SK-N-SH (cell line): ENCODE measurements at regions of chr1 and their contacts with region 1.

Region 1: GRCh38 chr1:18913065-18913835 is 10.9 kb upstream of the ALDH4A1 start:
- DNase-seq: peak; percentile 95
- H3K4me3 ChIP-seq: no peak overlapping the region; a peak in 1 of 4 replicates
- H3K27ac ChIP-seq: no peak overlapping the region
- H3K4me1 ChIP-seq: no peaks in the 10 kb centered on the region; a peak in 1 of 4 replicates
- H3K27me3 ChIP-seq: no peaks in the 10 kb centered on the region
- CTCF ChIP-seq: peak; percentile 98
- EP300 ChIP-seq: no peak
- RAD21 ChIP-seq: peak; percentile 88

Region 2: DNA sequence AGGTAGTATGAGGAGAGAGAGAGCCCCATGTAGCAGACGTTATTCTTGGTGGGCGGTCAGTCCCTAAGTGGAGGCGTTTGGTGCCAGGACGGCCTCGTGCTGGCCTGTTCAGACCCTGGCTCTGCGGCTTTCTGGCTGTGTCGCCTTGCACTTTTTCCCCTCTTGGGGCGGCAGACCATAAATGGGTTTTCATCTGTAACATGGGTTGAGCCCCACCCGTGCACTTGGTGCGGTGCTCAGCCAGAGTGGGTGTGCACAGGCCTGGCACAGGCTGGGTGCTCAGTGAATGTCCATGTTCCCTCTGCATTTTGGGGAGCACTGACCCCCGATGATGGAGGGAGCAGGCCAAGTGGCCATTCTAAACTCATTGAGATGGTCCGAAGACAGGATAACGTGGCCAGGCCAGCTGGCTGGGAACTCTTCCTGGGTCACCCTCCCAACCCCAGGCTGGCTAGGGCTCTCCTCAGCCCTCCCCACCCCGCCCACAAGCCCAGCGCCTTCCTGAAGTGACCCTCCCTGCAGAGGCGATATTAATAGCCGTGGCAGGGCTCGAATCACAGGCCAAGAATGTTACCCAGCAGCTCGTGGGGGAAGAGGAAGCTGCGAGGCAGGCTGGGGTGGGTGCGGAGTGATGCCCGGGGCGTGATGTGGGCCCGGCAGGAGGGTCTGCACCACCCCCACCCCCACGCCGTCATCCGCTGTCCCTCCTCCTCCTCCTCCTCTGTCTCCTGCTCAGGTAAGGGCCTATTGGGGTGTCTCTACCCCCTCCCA is 1295.3 kb before region 1 on chr1:
- CTCF ChIA-PET with region 1: no interaction called
- POLR2A ChIA-PET with region 1: no interaction called
- DNase-seq: no peak
- H3K4me3 ChIP-seq: no peak overlapping the region
- H3K27ac ChIP-seq: no peak overlapping the region
- H3K4me1 ChIP-seq: peaks cover 0 to 14% of the 10 kb centered on the region in 2 experiments; a peak in 1 of 4 replicates
- H3K27me3 ChIP-seq: no peaks in the 10 kb centered on the region
- CTCF ChIP-seq: no peak
- EP300 ChIP-seq: no peak
- RAD21 ChIP-seq: no peak

Region 3: GRCh38 chr1:18883636-18884418 is 29.4 kb before region 1 on chr1:
- CTCF ChIA-PET with region 1: interaction called, 134 read pairs
- POLR2A ChIA-PET with region 1: no interaction called
- DNase-seq: peak; percentile 86
- H3K4me3 ChIP-seq: no peak overlapping the region; a peak in 1 of 4 replicates
- H3K27ac ChIP-seq: no peak overlapping the region
- H3K4me1 ChIP-seq: peaks cover 4 to 8% of the 10 kb centered on the region in 2 experiments; a peak in 2 of 4 replicates
- H3K27me3 ChIP-seq: no peaks in the 10 kb centered on the region
- CTCF ChIP-seq: peak; percentile 84
- EP300 ChIP-seq: no peak
- RAD21 ChIP-seq: peak; percentile 82

Region 4: GRCh38 chr1:18926315-18927081 is 13.2 kb after region 1 on chr1:
- CTCF ChIA-PET with region 1: interaction called, 98 read pairs
- POLR2A ChIA-PET with region 1: no interaction called
- DNase-seq: no peak
- H3K4me3 ChIP-seq: 0 out of 4 replicates have a peak overlapping the region, but pooled peaks of 1 of the 2 experiments have one; percentile 22
- H3K27ac ChIP-seq: peak overlapping the region in 1 of 2 experiments; percentile 94; a peak in 2 of 4 replicates
- H3K4me1 ChIP-seq: peaks cover 46 to 50% of the 10 kb centered on the region in 2 experiments; a peak in 3 of 4 replicates
- H3K27me3 ChIP-seq: no peaks in the 10 kb centered on the region
- CTCF ChIP-seq: no peak
- EP300 ChIP-seq: peak in 1 of 2 experiments; percentile 75; a peak in 1 of 4 replicates
- RAD21 ChIP-seq: no peak

Region 5: DNA sequence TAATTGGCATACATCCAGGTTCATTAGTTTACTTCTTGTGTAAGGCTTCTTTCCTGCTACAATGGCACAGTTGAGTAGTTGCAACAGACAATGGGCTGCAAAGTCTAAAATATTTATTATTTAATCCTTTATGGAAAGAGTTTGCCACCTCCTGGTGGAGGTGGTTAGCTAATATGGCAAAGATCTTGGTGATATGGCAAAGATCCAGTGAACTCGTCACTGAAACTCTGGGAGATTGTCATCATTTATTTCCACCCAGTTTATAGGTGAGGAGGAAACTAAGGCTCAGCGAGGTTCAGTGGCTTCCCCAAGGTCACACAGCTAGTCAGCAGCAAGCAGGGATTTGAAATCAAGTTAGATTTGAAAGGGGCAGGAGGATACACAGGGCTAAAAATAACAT is 59.3 kb after region 1 on chr1:
- CTCF ChIA-PET with region 1: interaction called, 20 read pairs
- POLR2A ChIA-PET with region 1: no interaction called
- DNase-seq: no peak
- H3K4me3 ChIP-seq: no peak overlapping the region
- H3K27ac ChIP-seq: no peak overlapping the region
- H3K4me1 ChIP-seq: no peaks in the 10 kb centered on the region
- H3K27me3 ChIP-seq: no peaks in the 10 kb centered on the region
- CTCF ChIP-seq: peak; percentile 48
- EP300 ChIP-seq: no peak
- RAD21 ChIP-seq: no peak

Region 6: DNA sequence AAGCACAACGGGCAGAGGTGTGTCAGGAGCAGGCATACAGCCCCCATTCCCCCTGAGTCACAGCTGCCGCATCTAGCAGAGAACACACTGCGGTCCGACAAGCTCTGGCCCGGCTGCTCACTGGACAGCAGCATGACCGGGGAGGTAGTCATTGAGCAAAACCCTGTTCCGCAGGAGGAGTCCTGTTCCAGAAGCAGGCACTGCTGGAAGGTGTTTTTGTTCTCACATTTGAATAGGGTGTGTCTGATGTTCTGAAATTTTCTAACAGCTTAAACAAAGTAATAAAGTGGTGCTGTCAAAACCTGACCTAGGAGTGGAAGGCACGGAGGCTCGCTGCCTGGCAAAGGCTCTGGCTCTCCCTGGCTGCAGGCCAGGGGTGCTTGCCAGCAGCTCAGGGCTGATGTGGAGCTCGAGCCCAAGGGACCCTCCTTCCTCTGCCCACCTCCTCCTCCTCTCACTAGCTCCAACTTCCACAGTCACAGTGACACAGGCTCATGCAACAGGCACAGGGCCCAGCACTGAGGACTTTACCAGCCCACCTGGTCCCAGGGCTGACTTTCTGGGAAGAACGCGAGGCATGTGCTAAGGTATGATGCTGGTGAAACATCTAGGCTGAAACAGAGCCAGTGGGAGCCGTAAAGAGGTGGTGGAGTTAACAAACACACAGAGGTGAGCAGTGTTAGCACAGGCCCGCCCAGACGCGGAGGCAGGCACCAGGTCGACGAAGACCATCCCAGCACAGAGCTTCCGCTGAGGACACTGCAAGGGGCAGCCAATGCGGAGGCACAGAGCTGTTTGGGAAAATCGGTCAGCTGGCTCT is 161.9 kb after region 1 on chr1:
- CTCF ChIA-PET with region 1: interaction called, 44 read pairs
- POLR2A ChIA-PET with region 1: no interaction called
- DNase-seq: no peak
- H3K4me3 ChIP-seq: no peak overlapping the region
- H3K27ac ChIP-seq: no peak overlapping the region; a peak in 1 of 4 replicates
- H3K4me1 ChIP-seq: peaks cover 0 to 5% of the 10 kb centered on the region in 2 experiments; a peak in 1 of 4 replicates
- H3K27me3 ChIP-seq: no peaks in the 10 kb centered on the region
- CTCF ChIP-seq: no peak
- EP300 ChIP-seq: no peak
- RAD21 ChIP-seq: no peak

Region 7: GRCh38 chr1:19113697-19114092 is 200.4 kb after region 1 on chr1:
- CTCF ChIA-PET with region 1: interaction called, 49 read pairs
- POLR2A ChIA-PET with region 1: no interaction called
- DNase-seq: peak; percentile 48
- H3K4me3 ChIP-seq: no peak overlapping the region
- H3K27ac ChIP-seq: no peak overlapping the region
- H3K4me1 ChIP-seq: no peaks in the 10 kb centered on the region
- H3K27me3 ChIP-seq: no peaks in the 10 kb centered on the region
- CTCF ChIP-seq: peak; percentile 67
- EP300 ChIP-seq: no peak
- RAD21 ChIP-seq: peak; percentile 62